MCF 10A (cell line): ENCODE measurements at regions of chr4 and their contacts with region 1.

Region 1: GRCh38 chr4:152255437-152256011 is 280.4 kb downstream of the FBXW7 start:
- DNase-seq: peak; percentile 57
- H3K4me3 Mint-ChIP-seq: no peak overlapping the region
- H3K27ac Mint-ChIP-seq: no peak overlapping the region
- H3K4me1 Mint-ChIP-seq: peaks cover 19% of the 10 kb centered on the region
- H3K27me3 Mint-ChIP-seq: no peaks in the 10 kb centered on the region
- CTCF ChIP-seq: no peak

Region 2: DNA sequence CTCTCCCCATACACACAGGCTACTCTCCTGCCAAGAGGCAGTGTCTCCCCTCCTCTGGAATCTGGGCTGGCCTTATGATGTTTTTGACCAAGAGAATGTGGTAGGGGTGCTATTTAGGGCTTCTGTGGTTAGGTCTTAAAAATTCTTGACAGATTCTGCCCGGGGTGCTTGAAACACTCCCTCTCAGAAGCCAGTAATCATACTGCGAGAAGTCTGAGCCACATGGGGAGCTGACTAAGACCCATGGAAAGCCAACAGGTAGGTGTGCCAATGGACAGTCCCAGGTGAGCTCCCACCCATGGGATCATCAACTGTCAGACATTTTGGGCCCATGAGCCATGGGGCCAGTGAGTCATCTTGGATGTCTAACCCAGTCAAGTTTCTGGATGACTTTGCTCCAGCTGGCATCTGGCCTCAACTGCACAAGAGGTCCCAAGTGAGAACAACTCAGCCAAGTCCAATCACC is 35.3 kb before region 1 on chr4:
- CTCF ChIA-PET with region 1: no interaction called
- POLR2A ChIA-PET with region 1: interaction called, 13 read pairs
- intact Hi-C with region 1: no loop called
- DNase-seq: peak; percentile 30
- H3K4me3 Mint-ChIP-seq: no peak overlapping the region
- H3K27ac Mint-ChIP-seq: no peak overlapping the region
- H3K4me1 Mint-ChIP-seq: no peaks in the 10 kb centered on the region
- H3K27me3 Mint-ChIP-seq: no peaks in the 10 kb centered on the region
- CTCF ChIP-seq: no peak

Region 3: GRCh38 chr4:152273343-152273742 is 17.8 kb after region 1 on chr4:
- CTCF ChIA-PET with region 1: interaction called, 4 read pairs
- POLR2A ChIA-PET with region 1: interaction called, 10 read pairs
- intact Hi-C with region 1: no loop called
- DNase-seq: peak; percentile 80
- H3K4me3 Mint-ChIP-seq: no peak overlapping the region
- H3K27ac Mint-ChIP-seq: peak overlapping the region; percentile 70
- H3K4me1 Mint-ChIP-seq: peaks cover 15% of the 10 kb centered on the region
- H3K27me3 Mint-ChIP-seq: no peaks in the 10 kb centered on the region
- CTCF ChIP-seq: no peak

Region 4: GRCh38 chr4:152328596-152328995 is 73.1 kb after region 1 on chr4:
- CTCF ChIA-PET with region 1: no interaction called
- POLR2A ChIA-PET with region 1: interaction called, 20 read pairs
- intact Hi-C with region 1: no loop called
- DNase-seq: peak; percentile 87
- H3K4me3 Mint-ChIP-seq: no peak overlapping the region
- H3K27ac Mint-ChIP-seq: peak overlapping the region; percentile 49
- H3K4me1 Mint-ChIP-seq: peaks cover 24% of the 10 kb centered on the region
- H3K27me3 Mint-ChIP-seq: no peaks in the 10 kb centered on the region
- CTCF ChIP-seq: no peak

Region 5: GRCh38 chr4:152415980-152416379 is 160.5 kb after region 1 on chr4:
- CTCF ChIA-PET with region 1: no interaction called
- POLR2A ChIA-PET with region 1: no interaction called
- intact Hi-C with region 1: no loop called
- DNase-seq: peak; percentile 5
- H3K4me3 Mint-ChIP-seq: no peak overlapping the region
- H3K27ac Mint-ChIP-seq: peak overlapping the region; percentile 53
- H3K4me1 Mint-ChIP-seq: peaks cover 16% of the 10 kb centered on the region
- H3K27me3 Mint-ChIP-seq: no peaks in the 10 kb centered on the region
- CTCF ChIP-seq: no peak